GM12878 (cell line): ENCODE measurements at regions of chr2 and their contacts with region 1.

Region 1: DNA sequence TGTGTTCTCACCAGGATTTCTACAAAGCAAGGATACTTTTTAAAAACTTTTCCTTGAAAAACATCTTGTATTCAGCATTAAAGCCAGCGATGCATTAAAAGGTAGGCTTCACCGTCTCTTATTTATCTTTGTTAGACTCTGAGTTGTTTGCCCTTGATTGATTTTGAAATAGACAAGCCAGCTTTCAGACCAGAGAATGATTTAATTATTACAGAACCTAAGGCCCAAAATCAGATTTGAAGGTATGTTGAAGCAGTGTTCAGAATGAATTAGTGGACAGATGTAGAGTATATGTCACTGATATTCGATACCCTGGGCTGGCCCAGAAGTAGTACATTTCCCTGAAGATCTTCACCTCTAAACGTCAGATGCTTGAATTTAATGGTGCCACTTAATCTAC is 136.4 kb downstream of the THSD7B start:
- DNase-seq: no peak
- ATAC-seq: no peak
- H3K4me3 ChIP-seq: no peak overlapping the region
- H3K27ac ChIP-seq: no peak overlapping the region
- H3K4me1 ChIP-seq: no peaks in the 10 kb centered on the region
- H3K27me3 ChIP-seq: no peaks in the 10 kb centered on the region
- CTCF ChIP-seq: no peak
- EP300 ChIP-seq: no peak
- POLR2A ChIP-seq: no peak
- RAD21 ChIP-seq: no peak

Region 2: GRCh38 chr2:136653861-136654260 is 247.9 kb before region 1 on chr2:
- CTCF ChIA-PET with region 1: no interaction called
- POLR2A ChIA-PET with region 1: no interaction called
- RAD21 ChIA-PET with region 1: no interaction called
- SMC1A ChIA-PET with region 1: no interaction called
- in situ Hi-C with region 1: no loop called
- intact Hi-C with region 1: no loop called
- DNase-seq: no peak
- ATAC-seq: no peak
- H3K4me3 ChIP-seq: no peak overlapping the region
- H3K27ac ChIP-seq: no peak overlapping the region
- H3K4me1 ChIP-seq: no peaks in the 10 kb centered on the region
- H3K27me3 ChIP-seq: no peaks in the 10 kb centered on the region
- CTCF ChIP-seq: no peak
- EP300 ChIP-seq: no peak
- POLR2A ChIP-seq: no peak
- RAD21 ChIP-seq: no peak

Region 3: GRCh38 chr2:136891100-136891499 is 10.6 kb before region 1 on chr2:
- CTCF ChIA-PET with region 1: interaction called, 10 read pairs
- POLR2A ChIA-PET with region 1: no interaction called
- RAD21 ChIA-PET with region 1: no interaction called
- SMC1A ChIA-PET with region 1: interaction called, 3 read pairs
- in situ Hi-C with region 1: no loop called
- intact Hi-C with region 1: no loop called
- DNase-seq: no peak
- ATAC-seq: no peak
- H3K4me3 ChIP-seq: no peak overlapping the region
- H3K27ac ChIP-seq: no peak overlapping the region
- H3K4me1 ChIP-seq: no peaks in the 10 kb centered on the region
- H3K27me3 ChIP-seq: no peaks in the 10 kb centered on the region
- CTCF ChIP-seq: no peak
- EP300 ChIP-seq: no peak
- POLR2A ChIP-seq: no peak
- RAD21 ChIP-seq: no peak

Region 4: DNA sequence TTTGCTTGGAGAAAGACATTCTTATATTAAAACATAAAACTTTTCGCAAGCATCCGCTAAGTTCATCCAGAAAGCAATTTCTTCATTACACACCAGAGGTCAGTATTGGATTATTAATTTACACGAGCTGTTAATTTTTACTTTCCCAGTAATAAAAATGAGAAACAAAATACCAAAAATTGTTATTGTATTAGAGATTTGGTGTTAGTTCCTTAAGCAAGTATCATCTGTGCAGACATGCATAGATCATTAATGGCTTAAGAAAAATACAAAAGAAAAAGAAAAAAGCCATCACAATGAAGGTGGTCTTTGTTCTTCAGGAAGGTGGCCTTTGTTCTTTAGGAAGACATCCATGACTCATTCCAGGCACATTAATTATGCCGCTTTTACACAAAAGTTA is 1008.9 kb after region 1 on chr2:
- CTCF ChIA-PET with region 1: no interaction called
- POLR2A ChIA-PET with region 1: no interaction called
- RAD21 ChIA-PET with region 1: no interaction called
- SMC1A ChIA-PET with region 1: no interaction called
- in situ Hi-C with region 1: no loop called
- intact Hi-C with region 1: no loop called
- DNase-seq: no peak
- ATAC-seq: no peak
- H3K4me3 ChIP-seq: no peak overlapping the region
- H3K27ac ChIP-seq: no peak overlapping the region
- H3K4me1 ChIP-seq: no peaks in the 10 kb centered on the region
- H3K27me3 ChIP-seq: no peaks in the 10 kb centered on the region; a peak in 1 of 4 replicates
- CTCF ChIP-seq: peak; percentile 28 to 53 (median 28); a peak in 4 of 6 replicates
- EP300 ChIP-seq: no peak
- POLR2A ChIP-seq: no peak
- RAD21 ChIP-seq: peak; percentile 62